ENCODE measurements at regions of chr5 and their contacts with region 1.

Region 1: DNA sequence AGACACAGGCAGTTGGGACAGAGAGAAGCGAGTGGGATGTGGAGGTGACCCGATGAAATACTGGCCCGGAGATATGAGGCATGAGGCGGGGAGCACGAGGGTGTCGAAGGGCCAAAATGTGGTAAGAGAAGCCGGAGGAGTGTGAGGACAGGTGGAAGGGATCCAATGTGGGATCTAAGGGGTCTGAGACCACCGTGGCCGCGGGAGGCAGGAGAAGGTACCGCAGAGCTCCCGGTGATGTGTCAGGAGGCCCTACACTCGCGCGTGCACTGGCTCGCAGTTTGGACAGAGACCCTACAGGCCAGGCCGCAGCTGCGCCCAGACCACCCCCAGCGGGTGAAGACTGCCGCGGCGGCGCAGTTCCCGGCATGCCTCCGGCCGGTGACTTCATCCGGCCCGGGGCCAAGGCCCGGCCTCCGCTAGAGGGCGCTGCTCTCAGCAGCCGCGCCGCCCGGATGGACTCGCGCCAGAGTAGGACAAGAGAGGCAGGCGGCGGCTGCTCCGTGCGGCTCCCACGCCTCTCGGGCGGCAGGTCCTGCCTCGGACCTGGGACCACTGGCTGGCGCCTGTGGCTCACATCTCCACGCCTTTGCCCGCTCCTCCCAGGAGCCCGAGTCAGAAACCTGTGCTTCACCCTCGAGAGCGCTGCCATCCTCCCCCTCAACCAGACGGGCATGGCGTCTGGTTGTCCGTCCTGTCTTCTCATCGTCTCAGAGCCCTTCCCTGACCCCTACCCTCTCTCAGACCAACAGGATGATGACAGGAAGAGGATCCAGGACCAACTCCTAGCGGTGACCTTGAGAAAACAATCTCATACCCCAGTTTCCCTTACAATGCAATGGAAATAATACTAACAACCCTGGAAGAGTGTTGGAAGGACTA is 35.4 kb upstream of the STING1 start:
- DNase-seq: peak; percentile 95
- ATAC-seq: peak; percentile 91
- H3K4me3 Mint-ChIP-seq: peak overlapping the region; percentile 72
- H3K27ac Mint-ChIP-seq: peak overlapping the region; percentile 91
- H3K4me1 Mint-ChIP-seq: peaks cover 30% of the 10 kb centered on the region
- H3K27me3 Mint-ChIP-seq: no peaks in the 10 kb centered on the region

Region 2: GRCh38 chr5:139222335-139222734 is 295.6 kb before region 1 on chr5:
- CTCF ChIA-PET with region 1: no interaction called
- POLR2A ChIA-PET with region 1: no interaction called
- intact Hi-C with region 1: no loop called
- DNase-seq: no peak
- ATAC-seq: no peak
- H3K4me3 Mint-ChIP-seq: no peak overlapping the region
- H3K27ac Mint-ChIP-seq: no peak overlapping the region
- H3K4me1 Mint-ChIP-seq: no peaks in the 10 kb centered on the region
- H3K27me3 Mint-ChIP-seq: peaks cover 2% of the 10 kb centered on the region

Region 3: DNA sequence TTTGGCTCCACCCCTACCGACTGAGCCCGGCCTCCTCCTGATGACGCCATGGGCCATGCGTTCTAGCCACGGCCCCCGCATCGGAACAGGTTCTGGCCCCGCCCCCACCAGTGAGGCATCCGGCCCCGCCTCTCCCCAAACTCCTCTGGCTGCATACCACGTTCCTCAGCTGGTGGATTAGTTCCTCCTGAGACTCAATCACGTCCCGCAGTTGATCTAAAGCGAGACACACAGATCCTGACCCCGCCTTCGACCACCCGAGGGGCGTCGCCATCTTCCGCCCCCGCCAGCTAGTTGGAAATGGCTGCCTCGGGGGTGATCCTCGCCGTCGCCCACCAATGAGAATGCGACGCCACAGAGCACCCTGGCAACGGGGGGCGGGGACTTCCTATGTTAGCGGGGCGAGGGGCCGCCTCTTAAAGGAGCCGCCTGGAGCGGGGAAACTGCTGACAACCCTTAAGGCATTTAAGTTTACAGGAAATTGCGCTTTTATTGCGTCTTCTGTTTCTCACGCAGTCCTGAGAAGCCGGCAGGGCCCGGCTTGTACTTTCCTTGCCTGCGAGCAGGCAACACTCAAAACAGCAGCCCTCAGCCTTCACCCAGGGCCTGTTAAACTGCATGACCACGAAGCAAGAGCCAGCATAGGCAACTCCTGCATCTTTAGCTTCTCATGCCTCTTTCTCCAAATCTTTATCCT is 114.0 kb before region 1 on chr5 and contains the start of gene SPATA24:
- CTCF ChIA-PET with region 1: no interaction called
- POLR2A ChIA-PET with region 1: no interaction called
- intact Hi-C with region 1: loop called in 1 of 2 experiments (anchors 1 kb)
- DNase-seq: peak; percentile 100
- ATAC-seq: peak; percentile 93
- H3K4me3 Mint-ChIP-seq: peak within 1 kb of the TSS; percentile 79
- H3K27ac Mint-ChIP-seq: peak within 1 kb of the TSS; percentile 99
- H3K4me1 Mint-ChIP-seq: peaks cover 37% of the 10 kb centered on the region
- H3K27me3 Mint-ChIP-seq: no peaks in the 10 kb centered on the region
- total RNA-seq, gene SPATA24: 4.6 to 5.9 TPM

Region 4: GRCh38 chr5:139422307-139422893 is 95.5 kb before region 1 on chr5:
- CTCF ChIA-PET with region 1: interaction called, 254 read pairs
- POLR2A ChIA-PET with region 1: interaction called, 9 read pairs
- intact Hi-C with region 1: loop called (anchors 1 kb)
- DNase-seq: peak; percentile 66
- ATAC-seq: peak; percentile 93
- H3K4me3 Mint-ChIP-seq: no peak overlapping the region
- H3K27ac Mint-ChIP-seq: no peak overlapping the region
- H3K4me1 Mint-ChIP-seq: peaks cover 5% of the 10 kb centered on the region
- H3K27me3 Mint-ChIP-seq: no peaks in the 10 kb centered on the region

Region 5: DNA sequence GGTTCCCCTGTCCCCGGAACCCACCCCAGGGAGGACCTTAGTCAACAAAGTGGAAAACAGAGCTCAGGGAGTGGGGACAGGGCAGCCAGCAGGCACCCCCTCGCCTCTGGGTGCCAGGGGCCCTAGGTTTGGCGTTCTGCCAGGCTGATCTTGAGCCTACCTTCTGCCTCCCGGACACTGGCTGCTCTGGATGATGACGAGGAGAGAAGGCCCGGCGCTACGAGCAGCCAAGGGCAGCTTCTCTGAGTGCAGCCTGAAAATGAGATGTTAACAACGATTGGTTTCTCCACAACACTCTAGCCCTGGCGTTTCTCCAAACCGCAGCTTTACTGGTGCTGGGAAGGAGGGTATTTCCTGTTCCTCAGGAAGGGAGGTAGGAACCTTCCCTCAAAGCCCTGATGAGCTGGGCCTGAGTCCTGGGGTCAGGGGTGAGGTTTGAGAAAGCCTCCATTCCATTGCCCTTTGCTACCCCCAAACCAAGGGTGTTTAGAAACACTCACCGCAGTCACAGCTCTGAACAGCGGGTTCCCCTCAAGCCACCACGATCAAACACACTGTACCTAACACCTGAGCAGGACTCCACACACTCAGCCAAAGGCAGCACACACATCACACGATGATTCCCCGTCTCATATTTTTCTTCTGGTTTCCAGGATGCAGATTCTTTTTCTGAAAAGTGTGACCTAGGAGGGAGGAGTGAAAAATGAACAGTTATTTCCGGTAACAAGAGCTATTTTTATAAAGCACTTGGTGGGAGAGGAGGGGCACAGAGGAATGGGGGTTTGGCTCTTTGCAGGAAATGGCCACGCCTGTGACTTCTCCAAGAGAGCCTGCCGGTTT is 35.7 kb before region 1 on chr5 and contains the start of gene STING1:
- CTCF ChIA-PET with region 1: interaction called, 28 read pairs
- POLR2A ChIA-PET with region 1: interaction called, 8 read pairs
- intact Hi-C with region 1: loop called (anchors 1 to 2 kb)
- DNase-seq: peak; percentile 84
- ATAC-seq: peak; percentile 64
- H3K4me3 Mint-ChIP-seq: peak within 1 kb of the TSS; percentile 88
- H3K27ac Mint-ChIP-seq: peak within 1 kb of the TSS; percentile 99
- H3K4me1 Mint-ChIP-seq: peaks cover 35% of the 10 kb centered on the region
- H3K27me3 Mint-ChIP-seq: no peaks in the 10 kb centered on the region
- total RNA-seq, gene STING1: 178 to 183 TPM

Region 6: DNA sequence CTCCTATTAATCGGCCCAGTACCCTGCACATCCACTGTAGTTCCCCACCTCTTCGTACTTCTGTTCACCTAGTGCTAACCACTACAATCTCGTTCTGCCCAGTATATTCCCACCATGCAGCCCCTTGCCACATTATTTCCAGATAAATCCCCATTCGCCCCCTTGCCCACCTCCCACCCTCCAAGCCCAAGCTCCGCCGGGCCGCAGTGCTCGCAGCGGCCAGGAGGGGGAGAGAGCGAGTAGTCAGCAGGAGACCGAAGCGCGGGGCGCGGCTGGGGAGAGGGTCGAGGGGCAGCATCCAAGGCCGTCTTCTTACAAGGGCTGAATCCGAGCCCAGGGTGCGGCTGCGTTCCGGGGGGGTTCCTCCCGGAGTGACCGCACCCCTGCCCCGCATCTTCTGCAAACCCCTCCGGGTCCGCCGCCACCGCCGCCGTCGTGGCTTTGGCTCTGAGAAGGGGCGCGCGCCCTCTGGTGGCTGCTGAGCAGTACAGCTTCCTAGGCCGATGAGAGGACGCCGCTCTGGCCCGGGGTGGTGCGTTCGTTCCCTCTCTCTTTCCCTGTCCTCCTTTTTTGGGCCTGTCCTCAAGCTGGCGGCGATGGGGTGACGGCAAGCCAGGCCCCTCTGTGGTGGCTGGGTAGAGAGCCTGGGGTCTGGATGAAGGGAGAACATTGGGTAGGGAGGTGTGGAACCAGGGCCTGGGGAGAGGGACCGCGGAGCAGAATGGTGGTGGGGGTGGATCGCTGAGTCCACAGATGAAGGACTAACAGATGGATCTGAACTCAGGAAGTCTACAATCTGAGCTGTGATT is 247.7 kb after region 1 on chr5:
- CTCF ChIA-PET with region 1: no interaction called
- POLR2A ChIA-PET with region 1: no interaction called
- intact Hi-C with region 1: loop called in 1 of 2 experiments (anchors 1 kb)
- DNase-seq: peak; percentile 92
- ATAC-seq: peak; percentile 93
- H3K4me3 Mint-ChIP-seq: peak overlapping the region; percentile 58
- H3K27ac Mint-ChIP-seq: no peak overlapping the region
- H3K4me1 Mint-ChIP-seq: peaks cover 7% of the 10 kb centered on the region
- H3K27me3 Mint-ChIP-seq: peaks cover 26% of the 10 kb centered on the region

Measured in activated CD4-positive, alpha-beta T cell treated with anti-CD3 and anti-CD28 coated beads for 36 hours (primary cell).